IMR-90 (cell line): ENCODE measurements at regions of chr1 and their contacts with region 1.

Region 1: GRCh38 chr1:157819896-157820295 is at the start of gene FCRL1:
- DNase-seq: no peak
- ATAC-seq: no peak
- H3K4me3 ChIP-seq: no peak within 1 kb of the TSS
- H3K27ac ChIP-seq: no peak within 1 kb of the TSS
- H3K4me1 ChIP-seq: no peaks in the 10 kb centered on the region
- H3K27me3 ChIP-seq: no peaks in the 10 kb centered on the region
- CTCF ChIP-seq: no peak
- POLR2A ChIP-seq: no peak
- RAD21 ChIP-seq: no peak
- total RNA-seq, gene FCRL1: not detected in 2 replicates

Region 2: GRCh38 chr1:157781048-157781447 is 38.8 kb before region 1 on chr1:
- CTCF ChIA-PET with region 1: no interaction called
- POLR2A ChIA-PET with region 1: interaction called, 20 read pairs
- dilution Hi-C with region 1: no loop called
- in situ Hi-C with region 1: no loop called
- intact Hi-C with region 1: no loop called
- DNase-seq: no peak
- ATAC-seq: no peak
- H3K4me3 ChIP-seq: no peak overlapping the region
- H3K27ac ChIP-seq: no peak overlapping the region
- H3K4me1 ChIP-seq: no peaks in the 10 kb centered on the region
- H3K27me3 ChIP-seq: no peaks in the 10 kb centered on the region
- CTCF ChIP-seq: no peak
- POLR2A ChIP-seq: no peak
- RAD21 ChIP-seq: no peak

Region 3: GRCh38 chr1:157932069-157932468 is 112.2 kb after region 1 on chr1:
- CTCF ChIA-PET with region 1: no interaction called
- POLR2A ChIA-PET with region 1: no interaction called
- dilution Hi-C with region 1: no loop called
- in situ Hi-C with region 1: no loop called
- intact Hi-C with region 1: no loop called
- DNase-seq: peak; percentile 55
- ATAC-seq: no peak
- H3K4me3 ChIP-seq: no peak overlapping the region
- H3K27ac ChIP-seq: no peak overlapping the region
- H3K4me1 ChIP-seq: no peaks in the 10 kb centered on the region
- H3K27me3 ChIP-seq: no peaks in the 10 kb centered on the region
- CTCF ChIP-seq: no peak
- POLR2A ChIP-seq: no peak
- RAD21 ChIP-seq: no peak